ENCODE measurements at regions of chr4 and their contacts with region 1.

Region 1: DNA sequence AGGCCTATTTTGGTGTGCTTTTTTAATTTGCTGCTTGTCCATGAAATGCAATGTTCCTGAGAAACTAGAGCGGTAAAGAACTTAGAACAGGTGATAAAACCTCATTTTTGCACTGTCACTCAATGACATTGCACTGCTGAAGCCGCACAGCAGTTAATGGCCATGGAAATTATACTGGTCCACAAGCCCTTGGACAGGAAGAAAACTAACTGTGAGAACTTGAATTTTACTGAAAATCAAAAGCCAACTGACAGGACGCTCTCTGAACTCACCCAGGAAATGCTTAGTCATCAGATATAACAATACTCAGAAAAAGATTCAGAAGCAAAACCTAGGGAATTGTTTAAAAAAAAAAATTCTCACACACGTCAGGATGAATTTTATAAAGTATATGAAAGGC is 246.4 kb upstream of the SLC7A11 start:
- DNase-seq: no peak
- ATAC-seq: no peak
- H3K4me3 ChIP-seq: no peak overlapping the region
- H3K27ac ChIP-seq: no peak overlapping the region
- H3K4me1 ChIP-seq: no peaks in the 10 kb centered on the region
- H3K27me3 ChIP-seq: no peaks in the 10 kb centered on the region
- CTCF ChIP-seq: no peak
- POLR2A ChIP-seq: no peak
- RAD21 ChIP-seq: no peak

Region 2: DNA sequence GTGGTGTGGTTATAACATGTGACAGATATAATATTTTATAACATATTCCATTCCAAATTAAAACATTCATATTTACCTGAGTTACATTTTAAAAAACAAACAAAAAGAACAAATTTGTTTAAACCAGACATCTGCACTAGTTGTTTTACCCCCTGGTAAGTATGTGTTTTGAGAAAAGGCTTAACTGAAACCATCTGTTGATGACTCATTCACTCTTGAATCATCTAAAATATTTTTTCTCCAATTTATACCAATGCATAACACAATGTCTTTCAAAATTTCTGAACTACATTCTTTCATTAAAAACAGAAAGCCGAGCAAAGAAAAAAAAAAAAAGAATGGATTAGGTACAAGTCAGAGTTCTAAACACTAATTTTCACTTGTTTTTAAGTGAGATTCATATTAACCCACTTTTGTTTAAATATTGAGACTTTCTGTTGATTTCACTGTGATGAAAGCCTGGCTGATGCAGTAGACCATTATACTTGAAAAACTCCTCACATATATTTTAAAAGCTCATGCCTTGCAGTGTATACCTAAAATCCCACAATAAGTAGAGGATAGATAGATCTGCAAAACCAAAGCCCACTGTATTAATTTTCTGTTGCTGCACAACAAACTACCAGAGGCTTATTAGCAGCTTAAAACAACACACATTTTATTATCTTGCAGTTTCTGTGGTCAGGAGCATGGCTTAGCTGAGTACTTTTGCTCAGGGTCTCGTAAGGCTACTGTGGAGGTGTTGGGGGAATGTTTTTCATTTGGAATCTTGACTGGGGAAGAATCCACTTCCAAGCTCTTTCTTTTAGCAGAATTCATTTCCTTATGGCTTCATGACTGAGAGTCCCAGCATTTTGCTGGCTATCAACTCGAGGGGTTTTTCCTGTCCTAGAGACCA is 1177.7 kb before region 1 on chr4:
- CTCF ChIA-PET with region 1: no interaction called
- POLR2A ChIA-PET with region 1: no interaction called
- dilution Hi-C with region 1: no loop called
- in situ Hi-C with region 1: no loop called
- intact Hi-C with region 1: no loop called
- DNase-seq: peak; percentile 91
- ATAC-seq: peak; percentile 72
- H3K4me3 ChIP-seq: no peak overlapping the region
- H3K27ac ChIP-seq: peak overlapping the region; percentile 98
- H3K4me1 ChIP-seq: peaks cover 10% of the 10 kb centered on the region
- H3K27me3 ChIP-seq: no peaks in the 10 kb centered on the region
- CTCF ChIP-seq: no peak
- POLR2A ChIP-seq: no peak
- RAD21 ChIP-seq: no peak

Region 3: GRCh38 chr4:137722910-137723309 is 765.6 kb before region 1 on chr4:
- CTCF ChIA-PET with region 1: no interaction called
- POLR2A ChIA-PET with region 1: no interaction called
- dilution Hi-C with region 1: no loop called
- in situ Hi-C with region 1: no loop called
- intact Hi-C with region 1: no loop called
- DNase-seq: no peak
- ATAC-seq: peak; percentile 51
- H3K4me3 ChIP-seq: no peak overlapping the region
- H3K27ac ChIP-seq: no peak overlapping the region
- H3K4me1 ChIP-seq: no peaks in the 10 kb centered on the region
- H3K27me3 ChIP-seq: no peaks in the 10 kb centered on the region
- CTCF ChIP-seq: no peak
- POLR2A ChIP-seq: no peak
- RAD21 ChIP-seq: no peak

Region 4: GRCh38 chr4:138182838-138183426 is 305.6 kb before region 1 on chr4:
- CTCF ChIA-PET with region 1: no interaction called
- POLR2A ChIA-PET with region 1: no interaction called
- dilution Hi-C with region 1: no loop called
- in situ Hi-C with region 1: no loop called
- intact Hi-C with region 1: no loop called
- DNase-seq: peak; percentile 72
- ATAC-seq: peak; percentile 31; the same call in 1 of the 2 replicates
- H3K4me3 ChIP-seq: no peak overlapping the region
- H3K27ac ChIP-seq: no peak overlapping the region
- H3K4me1 ChIP-seq: peaks cover 4% of the 10 kb centered on the region; the same call in 1 of the 2 replicates
- H3K27me3 ChIP-seq: no peaks in the 10 kb centered on the region
- CTCF ChIP-seq: peak; percentile 76
- POLR2A ChIP-seq: no peak
- RAD21 ChIP-seq: peak; percentile 76

Region 5: DNA sequence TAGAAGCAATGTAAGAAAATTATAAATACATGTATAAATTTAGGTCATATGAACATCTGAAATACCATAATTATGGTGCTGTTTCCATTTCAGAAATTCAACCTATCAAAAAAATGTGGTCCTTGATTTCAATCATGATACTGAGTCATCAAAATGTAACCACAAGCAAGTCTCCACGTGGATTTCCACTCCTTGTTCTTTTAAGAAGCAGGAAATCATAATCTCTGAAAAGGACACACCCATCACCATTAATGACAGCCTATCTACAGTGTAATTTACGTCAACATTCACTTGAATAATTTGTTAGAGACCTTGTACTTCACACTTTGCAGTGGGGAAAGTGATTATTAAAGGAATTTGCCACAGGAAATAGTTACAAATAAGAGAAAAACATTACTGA is 228.7 kb before region 1 on chr4:
- CTCF ChIA-PET with region 1: no interaction called
- POLR2A ChIA-PET with region 1: no interaction called
- dilution Hi-C with region 1: no loop called
- in situ Hi-C with region 1: no loop called
- intact Hi-C with region 1: loop called (anchors 5 kb)
- DNase-seq: peak; percentile 64
- ATAC-seq: no peak
- H3K4me3 ChIP-seq: no peak overlapping the region
- H3K27ac ChIP-seq: no peak overlapping the region
- H3K4me1 ChIP-seq: no peaks in the 10 kb centered on the region; the same call in 1 of the 2 replicates
- H3K27me3 ChIP-seq: no peaks in the 10 kb centered on the region
- CTCF ChIP-seq: no peak
- POLR2A ChIP-seq: no peak
- RAD21 ChIP-seq: no peak

Measured in IMR-90 (cell line).